Panc1 (cell line): ENCODE measurements at regions of chr10 and their contacts with region 1.

Region 1: GRCh38 chr10:129365767-129366402 is 101.2 kb upstream of the MGMT start:
- DNase-seq: no peak
- ATAC-seq: no peak
- H3K4me3 ChIP-seq: no peak overlapping the region
- H3K27ac ChIP-seq: no peak overlapping the region
- H3K4me1 ChIP-seq: no peaks in the 10 kb centered on the region
- H3K27me3 ChIP-seq: peaks cover 14% of the 10 kb centered on the region
- CTCF ChIP-seq: no peak

Region 2: GRCh38 chr10:129465796-129466702 is 100.2 kb after region 1 on chr10:
- CTCF ChIA-PET with region 1: no interaction called
- POLR2A ChIA-PET with region 1: no interaction called
- in situ Hi-C with region 1: no loop called
- intact Hi-C with region 1: no loop called
- DNase-seq: no peak
- ATAC-seq: peak; percentile 30
- H3K4me3 ChIP-seq: peak overlapping the region; percentile 55 to 65
- H3K27ac ChIP-seq: peak overlapping the region; percentile 89
- H3K4me1 ChIP-seq: peaks cover 6% of the 10 kb centered on the region
- H3K27me3 ChIP-seq: no peaks in the 10 kb centered on the region
- CTCF ChIP-seq: no peak

Region 3: DNA sequence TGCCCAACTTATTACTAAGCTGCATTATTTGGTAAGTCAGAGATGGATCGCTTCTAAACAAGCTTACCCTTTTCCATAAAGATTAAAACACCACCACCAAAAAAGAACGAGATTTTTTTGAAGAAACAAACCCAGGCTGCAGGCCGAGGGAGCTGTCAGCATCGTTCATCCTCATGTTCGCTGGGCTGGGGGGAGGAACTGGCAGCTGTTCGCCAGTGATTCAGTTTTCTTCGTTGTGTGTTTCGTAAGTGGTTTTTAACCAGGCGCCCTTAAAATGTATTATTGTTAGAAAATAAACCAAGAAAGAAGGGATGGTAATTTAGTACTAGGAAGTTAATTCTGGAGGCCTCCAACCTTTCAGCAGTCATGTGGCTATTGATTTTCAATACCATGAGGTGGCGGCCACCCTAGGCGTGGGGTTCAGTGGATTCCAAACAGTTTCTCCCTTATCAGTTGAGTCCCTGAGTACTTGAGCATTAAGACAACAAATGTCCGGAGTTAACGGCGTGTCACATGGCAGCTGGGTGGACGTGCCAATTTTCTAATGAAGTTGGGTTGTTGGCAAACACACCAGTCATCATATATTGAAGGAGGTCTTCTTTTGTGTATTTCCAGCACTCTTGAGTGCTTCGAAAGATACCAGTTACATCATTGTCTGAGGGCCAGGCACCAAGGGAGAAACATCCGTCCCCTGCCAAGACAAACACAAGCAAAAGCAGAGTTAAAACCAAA is 425.0 kb after region 1 on chr10:
- CTCF ChIA-PET with region 1: interaction called, 12 read pairs
- POLR2A ChIA-PET with region 1: no interaction called
- in situ Hi-C with region 1: no loop called
- intact Hi-C with region 1: no loop called
- DNase-seq: no peak
- ATAC-seq: no peak
- H3K4me3 ChIP-seq: no peak overlapping the region
- H3K27ac ChIP-seq: no peak overlapping the region
- H3K4me1 ChIP-seq: no peaks in the 10 kb centered on the region
- H3K27me3 ChIP-seq: no peaks in the 10 kb centered on the region
- CTCF ChIP-seq: no peak